Endothelial cell of umbilical vein (primary cell): ENCODE measurements at regions of chr4 and their contacts with region 1.

Region 1: DNA sequence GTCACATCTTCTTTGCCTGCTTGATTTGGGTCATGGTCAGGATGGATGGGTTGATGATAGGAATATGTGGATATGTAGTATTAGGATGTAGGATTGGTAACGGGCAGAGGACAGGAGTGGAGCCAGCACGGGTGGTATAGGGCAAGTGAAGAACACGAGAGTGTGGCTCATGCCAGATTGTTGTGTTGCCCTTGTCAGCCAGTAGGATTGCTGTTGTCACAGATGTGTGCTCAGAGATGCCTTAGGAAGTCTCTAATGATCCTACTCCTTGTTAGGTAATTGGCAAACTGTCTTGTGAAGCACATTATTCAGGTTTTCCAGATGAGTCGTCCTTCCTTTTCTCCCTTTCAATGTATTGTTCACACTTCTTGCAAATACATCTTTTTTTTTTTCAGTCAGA is 5.5 kb downstream of the ATP10D start:
- DNase-seq: peak; percentile 80
- H3K4me3 ChIP-seq: no peak overlapping the region
- H3K27ac ChIP-seq: no peak overlapping the region
- H3K4me1 ChIP-seq: peaks cover 8% of the 10 kb centered on the region
- H3K27me3 ChIP-seq: no peaks in the 10 kb centered on the region
- CTCF ChIP-seq: peak; percentile 57 to 64
- POLR2A ChIP-seq: no peak

Region 2: GRCh38 chr4:47002593-47002992 is 488.0 kb before region 1 on chr4:
- CTCF ChIA-PET with region 1: no interaction called
- POLR2A ChIA-PET with region 1: no interaction called
- dilution Hi-C with region 1: no loop called
- intact Hi-C with region 1: no loop called
- DNase-seq: no peak
- H3K4me3 ChIP-seq: no peak overlapping the region
- H3K27ac ChIP-seq: no peak overlapping the region
- H3K4me1 ChIP-seq: no peaks in the 10 kb centered on the region
- H3K27me3 ChIP-seq: peaks cover 0 to 5% of the 10 kb centered on the region in 2 experiments
- CTCF ChIP-seq: no peak
- POLR2A ChIP-seq: no peak

Region 3: DNA sequence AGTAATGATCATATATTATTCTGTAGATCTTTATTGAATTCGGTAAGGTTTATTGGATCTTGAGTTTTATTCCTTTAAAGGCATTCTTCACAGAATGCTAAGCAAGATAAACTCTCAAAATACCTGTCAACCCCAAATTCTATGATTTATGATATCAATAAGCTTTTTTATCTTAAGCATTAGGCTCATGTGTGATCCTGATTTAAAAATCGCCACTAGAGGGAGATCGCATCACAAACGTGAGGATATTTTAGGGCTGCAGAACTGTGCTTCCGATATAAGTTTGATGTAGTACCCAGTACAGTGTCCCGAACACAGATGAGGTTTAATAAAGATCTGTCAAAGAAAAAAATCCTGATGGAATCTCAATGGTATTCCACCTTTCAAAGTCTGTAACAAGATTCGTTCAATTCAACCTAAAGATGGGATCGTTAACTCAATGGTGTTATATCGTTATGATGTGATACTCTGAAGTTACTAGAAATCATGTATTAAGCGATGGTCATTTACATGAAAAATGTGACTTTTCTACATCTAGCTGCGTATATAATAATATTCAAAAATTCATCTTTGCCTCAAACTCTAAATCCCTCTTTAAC is 178.4 kb after region 1 on chr4:
- CTCF ChIA-PET with region 1: interaction called, 6 read pairs
- POLR2A ChIA-PET with region 1: no interaction called
- dilution Hi-C with region 1: no loop called
- intact Hi-C with region 1: loop called (anchors 5 kb)
- DNase-seq: peak; percentile 56
- H3K4me3 ChIP-seq: no peak overlapping the region
- H3K27ac ChIP-seq: no peak overlapping the region
- H3K4me1 ChIP-seq: no peaks in the 10 kb centered on the region
- H3K27me3 ChIP-seq: peaks cover 9 to 10% of the 10 kb centered on the region in 2 experiments
- CTCF ChIP-seq: peak; percentile 27 to 50
- POLR2A ChIP-seq: no peak